Breast epithelium (tissue), 4 donors: ENCODE measurements at regions of chr10 and their contacts with region 1.

Region 1: GRCh38 chr10:79149662-79150443 is 81.1 kb downstream of the ZMIZ1 start:
- DNase-seq: peak; percentile 72 to 77
- H3K4me3 ChIP-seq: peak overlapping the region in 1 of 3 donors; percentile 34
- H3K27ac ChIP-seq: peak overlapping the region; percentile 92 to 98
- H3K4me1 ChIP-seq: peaks cover 46 to 64% of the 10 kb centered on the region in 2 donors
- H3K27me3 ChIP-seq: no peaks in the 10 kb centered on the region
- CTCF ChIP-seq: no peak
- POLR2A ChIP-seq: no peak

Region 2: DNA sequence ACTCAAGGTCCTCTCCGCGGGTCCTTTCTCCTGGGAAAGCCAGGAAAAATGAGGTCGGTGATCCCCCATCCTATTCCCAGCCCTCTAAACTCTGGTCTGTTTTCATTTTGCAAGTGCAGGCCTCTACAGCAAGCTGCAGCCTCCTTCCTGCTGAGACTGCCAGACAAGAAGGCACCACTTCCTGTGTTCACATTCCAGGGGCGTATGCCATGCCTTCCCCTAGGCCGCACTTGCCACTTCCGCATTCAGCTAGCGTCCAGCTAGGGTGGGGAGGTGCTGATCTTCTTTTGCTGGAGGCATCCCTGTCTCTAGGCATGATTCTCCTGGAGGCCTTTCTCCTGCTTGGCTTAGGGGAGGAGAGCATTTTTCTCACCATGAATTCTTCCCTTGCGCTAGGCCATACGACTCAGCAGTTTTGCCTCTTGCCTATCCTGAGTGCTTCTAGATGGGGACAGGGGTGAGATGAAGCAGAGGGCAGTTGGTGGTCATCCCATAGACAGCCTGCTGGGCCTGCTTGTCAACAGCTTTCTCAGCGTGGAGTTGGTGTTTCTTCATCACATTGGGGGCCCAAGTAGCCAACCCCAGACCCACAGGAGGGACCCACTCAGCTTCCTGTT is 787.3 kb before region 1 on chr10:
- intact Hi-C with region 1: no loop called
- DNase-seq: peak in 1 of 2 donors; percentile 72
- H3K4me3 ChIP-seq: no peak overlapping the region
- H3K27ac ChIP-seq: peak overlapping the region in 1 of 2 donors; percentile 29
- H3K4me1 ChIP-seq: no peaks in the 10 kb centered on the region
- H3K27me3 ChIP-seq: no peaks in the 10 kb centered on the region
- CTCF ChIP-seq: no peak
- POLR2A ChIP-seq: no peak

Region 3: GRCh38 chr10:79068562-79069324 is 81.1 kb before region 1 on chr10 and contains the start of gene ZMIZ1:
- intact Hi-C with region 1: loop called (anchors 1 kb)
- DNase-seq: peak; percentile 89
- H3K4me3 ChIP-seq: peak within 1 kb of the TSS; percentile 65 to 98 (median 78)
- H3K27ac ChIP-seq: peak within 1 kb of the TSS; percentile 98 to 99
- H3K4me1 ChIP-seq: peaks cover 11 to 20% of the 10 kb centered on the region in 2 donors
- H3K27me3 ChIP-seq: no peaks in the 10 kb centered on the region
- CTCF ChIP-seq: peak in 1 of 3 donors; percentile 21
- POLR2A ChIP-seq: no peak
- total RNA-seq, gene ZMIZ1: 34.4 to 63.7 (median 39.8) TPM

Region 4: DNA sequence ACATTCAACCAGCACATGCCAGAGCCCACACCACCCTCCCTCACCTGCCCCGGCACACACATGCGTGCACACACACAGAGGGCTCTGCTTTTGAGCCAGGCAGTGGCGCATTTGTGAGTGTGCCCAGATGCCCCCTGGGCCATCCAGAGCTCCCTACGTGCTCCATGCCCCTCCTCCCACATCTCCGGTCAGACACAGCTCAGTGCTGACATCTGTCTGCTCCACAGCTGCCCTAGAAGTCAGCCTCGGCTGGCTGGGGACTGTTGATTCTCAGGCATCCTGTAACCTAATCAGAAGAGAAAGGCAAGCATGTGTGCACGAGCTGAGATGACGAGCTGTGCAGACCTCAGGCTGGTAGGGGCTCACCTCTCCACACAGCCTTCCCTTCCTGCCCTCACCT is 54.0 kb after region 1 on chr10:
- intact Hi-C with region 1: no loop called
- DNase-seq: no peak
- H3K4me3 ChIP-seq: no peak overlapping the region
- H3K27ac ChIP-seq: no peak overlapping the region
- H3K4me1 ChIP-seq: no peaks in the 10 kb centered on the region
- H3K27me3 ChIP-seq: no peaks in the 10 kb centered on the region
- CTCF ChIP-seq: no peak
- POLR2A ChIP-seq: no peak

Region 5: DNA sequence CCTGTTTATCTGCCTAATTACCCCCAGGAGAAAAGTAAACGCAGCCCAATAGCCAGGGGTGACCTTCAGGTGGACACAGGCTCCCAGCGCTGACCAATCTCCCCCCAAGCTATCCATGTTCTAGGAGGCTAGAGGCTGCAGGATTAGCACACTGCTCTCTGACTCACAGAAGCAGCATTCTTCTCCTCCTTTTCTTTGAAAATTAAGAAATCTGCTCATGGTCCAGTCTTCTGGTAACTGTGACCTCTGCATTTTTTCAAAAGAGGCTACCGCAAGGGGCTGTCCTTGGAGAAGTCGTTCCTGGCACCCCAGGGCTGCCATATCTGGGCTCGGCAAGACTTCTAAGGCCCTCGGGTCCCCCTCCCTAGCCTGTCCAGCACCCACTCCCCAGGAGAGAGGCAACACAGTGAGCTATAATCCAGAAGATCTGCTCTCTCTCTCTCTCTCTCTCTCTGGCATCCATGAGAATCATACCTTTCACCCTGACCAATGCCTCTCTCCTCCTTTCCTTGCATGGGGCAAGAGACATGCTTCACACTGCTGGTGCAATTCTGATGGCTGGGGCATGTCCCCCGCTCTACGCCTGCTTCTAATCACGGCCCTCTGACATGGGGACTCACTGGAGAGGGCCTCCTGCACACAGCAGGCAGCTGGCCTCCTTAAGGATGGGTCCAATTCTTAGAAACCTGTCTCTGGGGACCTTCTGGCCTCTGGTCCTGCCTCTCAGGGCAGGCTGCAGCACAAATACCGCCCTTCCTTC is 1028.1 kb after region 1 on chr10:
- intact Hi-C with region 1: loop called (anchors 5 kb)
- DNase-seq: no peak
- H3K4me3 ChIP-seq: no peak overlapping the region
- H3K27ac ChIP-seq: peak overlapping the region in 1 of 2 donors; percentile 75
- H3K4me1 ChIP-seq: no peaks in the 10 kb centered on the region
- H3K27me3 ChIP-seq: no peaks in the 10 kb centered on the region
- CTCF ChIP-seq: no peak
- POLR2A ChIP-seq: no peak